HEK293 (cell line): ENCODE measurements at regions of chr22 and their contacts with region 1.

Region 1: DNA sequence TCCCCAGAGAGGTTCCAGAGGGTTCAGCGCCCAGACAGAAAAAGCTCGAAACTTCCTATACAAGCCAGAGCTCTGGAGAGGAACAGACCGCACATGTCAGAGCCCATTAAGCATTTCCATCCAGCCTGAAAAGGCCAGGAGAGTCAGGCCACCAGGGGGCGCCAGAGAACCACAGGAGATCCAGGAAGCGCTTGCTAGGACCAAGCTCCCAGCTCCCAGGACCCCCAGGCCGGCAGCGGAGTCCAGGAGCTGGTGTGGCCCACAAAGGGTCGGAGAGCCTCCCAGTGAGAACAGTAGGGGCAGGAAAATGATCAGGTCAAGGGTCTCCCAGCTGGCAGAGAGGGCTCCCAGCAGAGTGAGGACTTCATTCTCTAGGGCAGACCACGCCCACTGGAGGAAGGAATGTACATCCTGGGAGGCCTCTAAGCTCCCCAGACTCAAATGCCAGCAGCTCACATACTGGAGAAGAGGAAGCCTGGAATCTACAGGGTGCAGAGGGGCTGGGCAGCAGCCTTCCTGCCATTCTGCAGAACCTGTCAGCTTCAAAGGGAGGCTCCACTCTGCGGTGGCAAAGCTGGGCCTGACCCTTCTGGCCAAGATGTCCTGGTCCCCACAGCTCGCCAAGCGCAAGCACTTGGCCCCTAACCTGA is 2.1 kb upstream of the MEI1 start:
- H3K4me3 ChIP-seq: no peak overlapping the region
- H3K27ac ChIP-seq: no peak overlapping the region
- H3K4me1 ChIP-seq: no peaks in the 10 kb centered on the region
- CTCF ChIP-seq: peak; percentile 94

Region 2: DNA sequence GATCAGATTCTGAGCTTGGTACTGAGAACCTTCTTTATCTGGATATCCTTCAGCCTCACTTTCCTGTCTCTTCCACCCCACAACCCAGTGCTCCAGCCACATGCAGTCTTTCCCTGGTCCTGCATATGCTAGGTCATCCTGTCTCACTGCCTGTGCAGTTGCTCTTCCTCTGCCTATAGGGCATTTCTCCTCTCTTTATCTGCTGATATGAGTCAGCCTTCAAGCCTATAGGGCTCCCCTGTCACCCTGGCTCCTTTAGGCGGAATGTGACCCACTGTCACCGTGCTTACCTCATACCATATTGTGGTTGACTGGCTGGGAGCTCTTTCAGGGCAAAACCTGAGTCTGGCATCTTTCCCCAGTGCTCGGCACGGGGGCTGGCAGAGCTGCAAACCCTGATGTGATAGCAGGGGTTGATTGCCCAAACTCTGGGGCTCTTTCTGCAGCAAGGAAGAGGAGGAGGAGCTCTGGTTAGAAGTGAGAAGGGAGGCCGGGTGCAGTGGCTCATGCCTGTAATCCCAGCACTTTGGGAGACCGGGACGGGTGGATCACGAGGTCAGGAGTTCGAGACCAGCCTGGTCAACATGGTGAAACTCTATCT is 28.4 kb after region 1 on chr22:
- CTCF ChIA-PET with region 1: interaction called, 18 read pairs
- POLR2A ChIA-PET with region 1: interaction called, 5 read pairs
- H3K4me3 ChIP-seq: no peak overlapping the region
- H3K27ac ChIP-seq: no peak overlapping the region
- H3K4me1 ChIP-seq: no peaks in the 10 kb centered on the region
- CTCF ChIP-seq: no peak

Region 3: DNA sequence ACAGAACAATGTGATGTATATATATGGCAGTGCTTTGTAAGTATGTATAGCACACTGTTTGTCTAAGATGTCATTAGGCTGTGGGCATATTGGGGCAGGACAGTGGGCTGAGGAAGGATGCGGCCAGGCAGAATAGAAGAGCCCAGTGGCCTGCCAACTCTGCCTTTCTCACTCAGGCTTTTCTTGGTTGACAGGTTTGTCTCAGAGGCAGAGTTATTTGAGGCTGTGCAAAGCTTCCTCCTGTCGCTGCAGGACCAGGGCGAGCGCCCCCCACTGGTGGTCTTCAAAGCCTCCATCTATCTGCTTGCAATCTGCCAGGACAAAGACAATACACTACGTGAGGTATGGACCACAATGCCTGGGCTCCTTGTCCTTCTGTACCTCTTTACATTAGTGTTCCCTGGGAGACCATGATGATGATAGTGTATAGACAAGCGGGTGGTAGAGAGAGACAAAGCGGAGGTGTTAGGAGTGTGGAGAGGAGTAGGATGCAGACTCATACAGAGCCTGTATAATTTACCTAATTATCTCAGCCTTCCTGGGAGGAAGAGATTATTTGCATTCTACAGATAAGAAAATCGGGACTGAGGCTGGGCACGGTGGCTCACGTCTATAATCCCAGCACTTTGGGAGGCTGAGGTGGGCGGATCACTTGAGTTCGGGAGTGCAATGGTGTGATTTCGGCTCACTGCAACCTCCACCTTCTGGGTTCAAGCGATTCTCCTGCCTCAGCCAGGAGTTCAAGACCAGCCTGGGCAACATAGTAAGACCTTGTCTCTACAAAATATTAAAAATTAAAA is 65.9 kb after region 1 on chr22:
- CTCF ChIA-PET with region 1: interaction called, 22 read pairs
- POLR2A ChIA-PET with region 1: no interaction called
- H3K4me3 ChIP-seq: no peak overlapping the region
- H3K27ac ChIP-seq: no peak overlapping the region
- H3K4me1 ChIP-seq: no peaks in the 10 kb centered on the region
- CTCF ChIP-seq: peak; percentile 53; the same call in 1 of the 2 replicates

Region 4: DNA sequence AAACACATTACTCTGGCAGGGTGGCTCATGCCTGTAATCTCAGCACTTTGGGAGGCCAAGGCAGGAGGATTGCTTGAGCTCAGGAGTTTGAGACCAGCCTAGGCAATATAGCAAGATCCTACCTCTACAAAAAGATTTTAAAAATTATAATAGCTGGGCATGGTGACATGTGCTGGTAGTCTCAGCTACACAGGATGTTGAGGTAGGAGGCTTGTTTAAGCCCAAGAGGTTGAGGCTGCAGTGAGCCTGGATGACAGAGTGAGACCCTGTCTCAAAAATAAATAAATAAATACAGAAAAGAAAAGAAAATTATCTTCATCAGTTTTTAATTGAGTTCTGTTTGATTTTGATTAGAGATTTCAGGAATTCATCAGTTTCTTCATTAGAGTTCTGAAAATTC is 108.4 kb after region 1 on chr22:
- CTCF ChIA-PET with region 1: interaction called, 44 read pairs
- POLR2A ChIA-PET with region 1: interaction called, 20 read pairs
- H3K4me3 ChIP-seq: no peak overlapping the region
- H3K27ac ChIP-seq: no peak overlapping the region
- H3K4me1 ChIP-seq: no peaks in the 10 kb centered on the region; the same call in 1 of the 2 replicates
- CTCF ChIP-seq: no peak

Region 5: GRCh38 chr22:41857155-41857859 is 160.1 kb after region 1 on chr22:
- CTCF ChIA-PET with region 1: interaction called, 42 read pairs
- POLR2A ChIA-PET with region 1: interaction called, 3 read pairs
- H3K4me3 ChIP-seq: no peak overlapping the region
- H3K27ac ChIP-seq: no peak overlapping the region
- H3K4me1 ChIP-seq: peaks cover 10% of the 10 kb centered on the region
- CTCF ChIP-seq: no peak

Region 6: GRCh38 chr22:41940832-41941765 is 243.8 kb after region 1 on chr22:
- CTCF ChIA-PET with region 1: interaction called, 53 read pairs
- POLR2A ChIA-PET with region 1: interaction called, 15 read pairs
- H3K4me3 ChIP-seq: no peak overlapping the region
- H3K27ac ChIP-seq: 0 out of 2 replicates have a peak overlapping the region, but pooled peaks have one; percentile 12
- H3K4me1 ChIP-seq: no peaks in the 10 kb centered on the region; the same call in 1 of the 2 replicates
- CTCF ChIP-seq: peak; percentile 86